Endothelial cell of umbilical vein (primary cell): ENCODE measurements at regions of chr3 and their contacts with region 1.

Region 1: GRCh38 chr3:177893321-177893720 is 642.9 kb upstream of the KCNMB2 start:
- DNase-seq: peak; percentile 35
- H3K4me3 ChIP-seq: no peak overlapping the region
- H3K27ac ChIP-seq: peak overlapping the region; percentile 66
- H3K4me1 ChIP-seq: peaks cover 21% of the 10 kb centered on the region
- H3K27me3 ChIP-seq: no peaks in the 10 kb centered on the region
- CTCF ChIP-seq: peak; percentile 16 to 28
- POLR2A ChIP-seq: no peak

Region 2: DNA sequence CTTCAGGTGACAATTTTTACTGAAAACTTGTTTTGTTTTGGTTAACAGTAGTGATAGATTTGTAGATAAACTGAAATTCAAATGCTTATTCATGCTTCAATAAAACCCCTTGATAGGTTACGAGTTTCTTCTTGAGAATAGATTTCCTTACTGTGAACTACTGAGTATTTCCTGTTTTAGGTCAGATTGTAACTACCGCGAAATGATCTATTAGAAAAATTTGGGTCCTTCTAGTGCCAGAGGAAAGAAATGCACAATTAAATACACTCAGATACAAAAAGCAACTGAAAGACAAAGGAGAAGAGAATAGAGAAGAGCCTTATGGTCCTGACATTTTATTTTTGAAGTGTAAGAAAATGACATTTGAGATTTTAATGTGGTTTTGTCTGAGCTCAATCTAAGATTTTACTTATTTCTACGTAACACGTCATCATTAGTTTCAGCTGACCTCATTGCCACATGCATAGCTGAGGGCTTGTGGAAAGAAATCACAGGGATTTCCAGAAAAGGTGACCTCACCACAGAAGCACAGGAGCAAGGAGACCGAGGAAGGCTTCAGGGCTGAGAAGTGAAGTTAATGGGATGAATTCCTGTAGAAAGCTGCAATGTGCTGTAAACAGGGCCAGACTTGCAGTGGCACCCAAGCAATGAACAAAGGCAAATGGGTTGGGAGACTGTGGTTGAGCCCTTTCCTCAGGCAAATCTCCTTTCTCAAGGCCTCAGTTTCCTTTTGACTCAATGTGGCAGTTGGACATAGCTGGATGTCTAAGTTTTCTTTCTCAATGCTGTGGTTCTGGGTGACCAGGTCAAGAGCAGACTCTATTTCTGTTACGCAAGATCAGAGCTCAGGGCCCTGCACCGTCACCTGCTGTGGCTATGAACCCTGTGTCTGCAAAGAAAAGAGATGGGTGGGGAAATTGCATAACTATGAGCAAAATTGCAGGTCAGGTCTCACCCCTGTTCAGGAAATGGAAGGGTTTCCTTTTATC is 444.0 kb before region 1 on chr3:
- CTCF ChIA-PET with region 1: no interaction called
- POLR2A ChIA-PET with region 1: no interaction called
- dilution Hi-C with region 1: no loop called
- intact Hi-C with region 1: loop called (anchors 5 kb)
- DNase-seq: no peak
- H3K4me3 ChIP-seq: no peak overlapping the region
- H3K27ac ChIP-seq: no peak overlapping the region
- H3K4me1 ChIP-seq: peaks cover 23% of the 10 kb centered on the region
- H3K27me3 ChIP-seq: no peaks in the 10 kb centered on the region
- CTCF ChIP-seq: no peak
- POLR2A ChIP-seq: no peak

Region 3: DNA sequence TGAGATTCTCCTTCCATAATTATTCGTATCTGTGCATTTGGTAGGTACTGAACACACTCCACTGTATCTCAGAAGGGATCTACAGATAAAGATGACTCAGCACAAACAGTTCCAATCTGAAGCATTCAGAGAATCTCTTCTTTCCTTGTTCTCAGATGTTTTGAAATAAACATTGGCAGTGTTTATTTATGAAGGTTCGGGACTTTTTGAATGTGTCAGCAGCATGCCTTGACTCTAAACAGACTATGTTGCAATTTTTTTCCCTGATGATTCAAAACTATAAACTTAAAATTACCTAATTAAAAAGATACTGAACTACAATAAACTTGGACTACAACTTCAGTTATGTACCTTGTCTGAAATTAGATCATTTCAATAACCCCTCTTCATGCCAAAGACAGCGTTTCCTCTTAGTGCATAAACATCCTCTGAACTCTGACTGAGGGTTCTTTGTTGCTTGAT is 83.1 kb before region 1 on chr3:
- CTCF ChIA-PET with region 1: interaction called, 3 read pairs
- POLR2A ChIA-PET with region 1: no interaction called
- dilution Hi-C with region 1: no loop called
- intact Hi-C with region 1: loop called (anchors 5 kb)
- DNase-seq: peak; percentile 82
- H3K4me3 ChIP-seq: peak overlapping the region in 1 of 3 experiments; percentile 17
- H3K27ac ChIP-seq: peak overlapping the region; percentile 63
- H3K4me1 ChIP-seq: peaks cover 30% of the 10 kb centered on the region
- H3K27me3 ChIP-seq: no peaks in the 10 kb centered on the region
- CTCF ChIP-seq: no peak
- POLR2A ChIP-seq: no peak

Region 4: GRCh38 chr3:177934001-177934891 is 40.9 kb after region 1 on chr3:
- CTCF ChIA-PET with region 1: no interaction called
- POLR2A ChIA-PET with region 1: no interaction called
- dilution Hi-C with region 1: no loop called
- intact Hi-C with region 1: loop called (anchors 1 kb)
- DNase-seq: peak; percentile 12
- H3K4me3 ChIP-seq: no peak overlapping the region
- H3K27ac ChIP-seq: no peak overlapping the region
- H3K4me1 ChIP-seq: peaks cover 21% of the 10 kb centered on the region
- H3K27me3 ChIP-seq: no peaks in the 10 kb centered on the region
- CTCF ChIP-seq: no peak
- POLR2A ChIP-seq: no peak

Region 5: GRCh38 chr3:177960014-177960413 is 66.7 kb after region 1 on chr3:
- CTCF ChIA-PET with region 1: no interaction called
- POLR2A ChIA-PET with region 1: no interaction called
- dilution Hi-C with region 1: no loop called
- intact Hi-C with region 1: no loop called
- DNase-seq: no peak
- H3K4me3 ChIP-seq: no peak overlapping the region
- H3K27ac ChIP-seq: no peak overlapping the region
- H3K4me1 ChIP-seq: peaks cover 11% of the 10 kb centered on the region
- H3K27me3 ChIP-seq: no peaks in the 10 kb centered on the region
- CTCF ChIP-seq: no peak
- POLR2A ChIP-seq: no peak

Region 6: DNA sequence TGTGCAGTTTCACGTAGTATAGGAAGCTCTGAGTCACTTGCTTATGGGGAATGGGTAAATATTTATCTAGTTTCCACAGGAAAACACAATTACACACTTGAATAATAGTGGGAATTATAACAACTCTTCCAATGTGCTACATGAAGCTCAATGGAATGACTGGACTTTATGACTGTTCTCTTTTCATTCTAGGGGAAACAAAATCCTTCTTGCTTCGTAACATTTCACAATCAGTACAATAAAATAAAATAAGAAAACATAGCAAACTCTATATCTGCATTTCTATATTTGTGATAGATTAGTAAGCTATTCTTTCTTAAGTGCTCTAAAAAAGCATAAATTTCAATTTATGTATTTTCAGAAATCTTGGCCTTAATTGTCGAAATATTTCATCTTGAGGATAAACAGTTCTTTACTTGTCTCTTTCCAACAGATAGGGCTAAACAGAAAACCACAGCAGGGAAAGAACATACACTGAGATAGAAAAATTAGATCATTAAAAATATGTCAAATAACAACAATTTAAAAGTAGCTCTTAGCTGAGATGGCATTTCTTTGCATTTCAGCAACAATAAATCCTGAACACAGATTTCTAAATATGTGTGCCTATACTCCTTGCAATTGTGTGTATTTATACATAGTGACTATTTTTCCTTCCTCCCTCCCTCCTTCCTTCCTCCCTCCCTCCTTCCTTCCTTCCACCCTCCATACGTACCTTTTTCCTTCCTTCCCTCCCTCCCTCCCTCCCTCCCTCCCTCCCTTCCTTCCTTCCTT is 247.4 kb after region 1 on chr3:
- CTCF ChIA-PET with region 1: no interaction called
- POLR2A ChIA-PET with region 1: no interaction called
- dilution Hi-C with region 1: no loop called
- intact Hi-C with region 1: loop called (anchors 1 kb)
- DNase-seq: peak; percentile 74
- H3K4me3 ChIP-seq: no peak overlapping the region
- H3K27ac ChIP-seq: peak overlapping the region; percentile 60
- H3K4me1 ChIP-seq: peaks cover 10% of the 10 kb centered on the region
- H3K27me3 ChIP-seq: no peaks in the 10 kb centered on the region
- CTCF ChIP-seq: no peak
- POLR2A ChIP-seq: no peak

Region 7: GRCh38 chr3:178255315-178255714 is 362.0 kb after region 1 on chr3:
- CTCF ChIA-PET with region 1: interaction called, 3 read pairs
- POLR2A ChIA-PET with region 1: no interaction called
- dilution Hi-C with region 1: no loop called
- intact Hi-C with region 1: loop called (anchors 2 kb)
- DNase-seq: peak; percentile 98
- H3K4me3 ChIP-seq: no peak overlapping the region
- H3K27ac ChIP-seq: peak overlapping the region; percentile 62
- H3K4me1 ChIP-seq: peaks cover 15% of the 10 kb centered on the region
- H3K27me3 ChIP-seq: no peaks in the 10 kb centered on the region
- CTCF ChIP-seq: no peak
- POLR2A ChIP-seq: peak; percentile 49

Region 8: GRCh38 chr3:178352326-178353005 is 459.1 kb after region 1 on chr3:
- CTCF ChIA-PET with region 1: no interaction called
- POLR2A ChIA-PET with region 1: no interaction called
- dilution Hi-C with region 1: no loop called
- intact Hi-C with region 1: loop called (anchors 1 kb)
- DNase-seq: peak; percentile 90
- H3K4me3 ChIP-seq: no peak overlapping the region
- H3K27ac ChIP-seq: peak overlapping the region; percentile 89
- H3K4me1 ChIP-seq: peaks cover 21% of the 10 kb centered on the region
- H3K27me3 ChIP-seq: no peaks in the 10 kb centered on the region
- CTCF ChIP-seq: no peak
- POLR2A ChIP-seq: no peak